ENCODE measurements at regions of chr9 and their contacts with region 1.

Region 1: GRCh38 chr9:74952281-74953151 is at the start of gene C9orf40:
- DNase-seq: peak; percentile 86
- H3K4me3 Mint-ChIP-seq: peak within 1 kb of the TSS; percentile 98
- H3K27ac Mint-ChIP-seq: peak within 1 kb of the TSS; percentile 99
- H3K4me1 Mint-ChIP-seq: peaks cover 44% of the 10 kb centered on the region
- H3K27me3 Mint-ChIP-seq: no peaks in the 10 kb centered on the region
- total RNA-seq, gene C9orf40: 18.1 and 18.3 TPM in 2 replicates

Region 2: DNA sequence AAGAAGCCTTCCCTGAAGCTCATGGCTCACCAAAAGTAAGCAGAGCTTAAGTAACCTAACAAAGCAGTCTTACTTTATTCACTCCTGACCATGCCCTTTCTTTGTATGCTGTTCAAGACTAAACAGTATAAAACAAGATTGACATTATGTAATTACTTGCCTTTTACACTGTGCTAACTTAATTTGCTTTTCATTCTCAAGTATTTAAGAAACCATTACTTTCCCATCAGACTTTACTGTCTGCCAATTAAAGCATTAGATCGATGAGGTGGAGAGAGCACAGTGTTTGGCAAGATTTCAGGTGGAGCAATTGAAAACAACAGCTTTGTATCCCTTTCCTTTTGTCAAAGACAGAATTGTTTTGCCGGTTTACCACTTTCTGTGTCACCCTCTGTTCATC is 357.2 kb before region 1 on chr9:
- intact Hi-C with region 1: no loop called
- DNase-seq: no peak
- H3K4me3 Mint-ChIP-seq: no peak overlapping the region
- H3K27ac Mint-ChIP-seq: no peak overlapping the region
- H3K4me1 Mint-ChIP-seq: no peaks in the 10 kb centered on the region
- H3K27me3 Mint-ChIP-seq: peaks cover 2% of the 10 kb centered on the region

Region 3: GRCh38 chr9:74901001-74901400 is 51.5 kb before region 1 on chr9:
- intact Hi-C with region 1: no loop called
- DNase-seq: no peak
- H3K4me3 Mint-ChIP-seq: no peak overlapping the region
- H3K27ac Mint-ChIP-seq: no peak overlapping the region
- H3K4me1 Mint-ChIP-seq: no peaks in the 10 kb centered on the region
- H3K27me3 Mint-ChIP-seq: no peaks in the 10 kb centered on the region

Region 4: DNA sequence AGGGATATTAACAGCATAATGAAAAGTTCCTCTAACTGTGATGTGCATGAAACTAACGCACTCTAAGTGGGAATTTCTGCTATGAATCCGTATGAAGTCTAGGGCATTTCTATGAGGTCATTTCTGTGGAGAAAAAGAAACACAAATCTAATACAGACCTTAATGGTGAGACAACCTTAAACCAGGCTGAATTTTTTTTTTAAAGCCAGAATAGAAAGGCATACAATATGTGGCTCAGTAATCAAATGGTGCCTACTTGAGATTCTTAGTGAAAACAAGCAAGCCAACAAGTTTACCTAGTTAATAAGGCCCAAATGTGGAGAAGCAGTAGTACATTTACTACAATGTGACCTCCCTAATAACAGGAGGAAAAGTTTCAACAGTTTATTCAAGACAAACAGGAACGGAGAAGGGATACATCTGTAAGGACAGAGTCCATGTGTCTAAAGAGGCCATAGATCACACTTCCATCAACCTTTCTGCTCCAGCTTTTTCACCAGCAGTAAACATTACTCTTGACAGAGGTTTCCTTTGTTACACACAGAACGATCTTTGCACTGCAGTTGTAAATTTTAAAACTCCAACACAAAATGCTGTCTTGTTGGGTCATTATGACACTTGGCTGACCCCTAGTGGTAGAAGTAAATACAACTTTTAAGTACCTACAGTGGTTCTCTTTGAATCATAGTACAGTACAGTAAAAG is 49.4 kb after region 1 on chr9:
- intact Hi-C with region 1: loop called (anchors 2 kb)
- DNase-seq: no peak
- H3K4me3 Mint-ChIP-seq: no peak overlapping the region
- H3K27ac Mint-ChIP-seq: no peak overlapping the region
- H3K4me1 Mint-ChIP-seq: no peaks in the 10 kb centered on the region
- H3K27me3 Mint-ChIP-seq: no peaks in the 10 kb centered on the region

Measured in activated T-helper 1 cell treated with anti-CD3 and anti-CD28 coated beads, Interleukin-12 subunit alpha, Interleukin-12 subunit beta, Interleukin-2, Interleukin-4 antibody, amounts not matched to agents 30 ng/mL and 10 ng/mL and 1 ng/mL, durations not matched to agents 14 hours and 24 hours and 36 hours (primary cell).